ENCODE measurements at regions of chr1 and their contacts with region 1.

Region 1: GRCh38 chr1:32400876-32401631 is 6.8 kb upstream of the BSDC1 start:
- DNase-seq: peak; percentile 69 to 82
- ATAC-seq: peak; percentile 89 to 93
- H3K4me3 ChIP-seq: peak overlapping the region in 2 of 4 donors; percentile 7 to 25
- H3K27ac ChIP-seq: peak overlapping the region in 3 of 4 donors; percentile 5 to 50 (median 22)
- H3K4me1 ChIP-seq: no peaks in the 10 kb centered on the region
- H3K27me3 ChIP-seq: no peaks in the 10 kb centered on the region
- CTCF ChIP-seq: peak; percentile 79 to 95 (median 89)
- POLR2A ChIP-seq: no peak

Region 2: GRCh38 chr1:32413507-32414185 is 12.6 kb after region 1 on chr1:
- in situ Hi-C with region 1: no loop called
- intact Hi-C with region 1: no loop called
- DNase-seq: peak; percentile 20 to 31
- ATAC-seq: peak in 1 of 2 donors; percentile 72
- H3K4me3 ChIP-seq: no peak overlapping the region
- H3K27ac ChIP-seq: no peak overlapping the region
- H3K4me1 ChIP-seq: no peaks in the 10 kb centered on the region
- H3K27me3 ChIP-seq: no peaks in the 10 kb centered on the region
- CTCF ChIP-seq: peak; percentile 57 to 74 (median 68)
- POLR2A ChIP-seq: no peak

Region 3: DNA sequence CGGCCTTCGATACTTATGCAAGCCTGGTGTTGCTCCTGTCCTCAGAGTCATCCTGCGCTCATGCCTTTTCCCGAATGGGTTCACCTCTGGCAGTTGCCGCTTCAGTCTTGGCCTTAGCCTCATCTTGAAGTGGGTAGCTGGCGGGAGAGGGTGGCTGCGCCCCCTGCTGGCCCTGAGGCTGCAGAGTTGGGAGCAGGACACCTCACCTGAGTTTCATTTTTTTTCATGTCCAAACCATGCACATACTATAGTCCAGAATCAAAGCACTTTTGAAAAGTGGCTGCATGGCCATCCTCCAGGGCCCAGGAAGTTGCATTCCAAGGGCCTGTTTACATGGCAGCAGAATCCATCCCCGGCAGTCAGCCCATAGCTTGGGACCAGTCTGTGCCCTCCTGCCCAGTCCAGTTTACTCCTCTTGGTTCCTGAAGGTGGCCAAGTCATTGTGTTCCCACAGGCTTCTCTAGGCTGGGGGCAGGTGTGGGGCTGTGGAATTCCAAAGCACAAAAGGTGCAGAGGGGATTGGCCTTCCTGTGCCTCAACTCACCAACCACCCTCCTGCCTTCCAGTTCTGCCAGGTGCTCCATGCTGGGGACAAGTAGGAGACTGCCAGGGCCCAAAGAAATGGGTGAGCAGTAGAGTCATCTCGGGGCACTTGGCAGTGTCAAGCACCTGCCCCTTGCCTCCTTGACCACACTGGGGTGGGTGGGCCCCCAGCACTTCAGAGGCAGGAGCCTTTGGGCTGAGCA is 372.1 kb after region 1 on chr1:
- in situ Hi-C with region 1: no loop called
- intact Hi-C with region 1: loop called (anchors 1 kb)
- DNase-seq: peak; percentile 61 to 84
- ATAC-seq: peak; percentile 81 to 89
- H3K4me3 ChIP-seq: no peak overlapping the region
- H3K27ac ChIP-seq: peak overlapping the region in 1 of 4 donors; percentile 21
- H3K4me1 ChIP-seq: peaks cover 0 to 5% of the 10 kb centered on the region in 2 donors
- H3K27me3 ChIP-seq: no peaks in the 10 kb centered on the region
- CTCF ChIP-seq: peak; percentile 83 to 96 (median 91)
- POLR2A ChIP-seq: no peak